Dendritic cell treated with granulocyte-macrophage colony-stimulating factor and Interleukin-4, amounts not matched to agents 40 ng/mL and 50 ng/mL, for 4 days (primary cell): ENCODE measurements at regions of chr5 and their contacts with region 1.

Region 1: GRCh38 chr5:172479044-172479783 is 24.9 kb upstream of the SH3PXD2B start:
- H3K4me3 Mint-ChIP-seq: no peak overlapping the region
- H3K27ac Mint-ChIP-seq: no peak overlapping the region
- H3K4me1 Mint-ChIP-seq: no peaks in the 10 kb centered on the region
- H3K27me3 Mint-ChIP-seq: peaks cover 7% of the 10 kb centered on the region

Region 2: DNA sequence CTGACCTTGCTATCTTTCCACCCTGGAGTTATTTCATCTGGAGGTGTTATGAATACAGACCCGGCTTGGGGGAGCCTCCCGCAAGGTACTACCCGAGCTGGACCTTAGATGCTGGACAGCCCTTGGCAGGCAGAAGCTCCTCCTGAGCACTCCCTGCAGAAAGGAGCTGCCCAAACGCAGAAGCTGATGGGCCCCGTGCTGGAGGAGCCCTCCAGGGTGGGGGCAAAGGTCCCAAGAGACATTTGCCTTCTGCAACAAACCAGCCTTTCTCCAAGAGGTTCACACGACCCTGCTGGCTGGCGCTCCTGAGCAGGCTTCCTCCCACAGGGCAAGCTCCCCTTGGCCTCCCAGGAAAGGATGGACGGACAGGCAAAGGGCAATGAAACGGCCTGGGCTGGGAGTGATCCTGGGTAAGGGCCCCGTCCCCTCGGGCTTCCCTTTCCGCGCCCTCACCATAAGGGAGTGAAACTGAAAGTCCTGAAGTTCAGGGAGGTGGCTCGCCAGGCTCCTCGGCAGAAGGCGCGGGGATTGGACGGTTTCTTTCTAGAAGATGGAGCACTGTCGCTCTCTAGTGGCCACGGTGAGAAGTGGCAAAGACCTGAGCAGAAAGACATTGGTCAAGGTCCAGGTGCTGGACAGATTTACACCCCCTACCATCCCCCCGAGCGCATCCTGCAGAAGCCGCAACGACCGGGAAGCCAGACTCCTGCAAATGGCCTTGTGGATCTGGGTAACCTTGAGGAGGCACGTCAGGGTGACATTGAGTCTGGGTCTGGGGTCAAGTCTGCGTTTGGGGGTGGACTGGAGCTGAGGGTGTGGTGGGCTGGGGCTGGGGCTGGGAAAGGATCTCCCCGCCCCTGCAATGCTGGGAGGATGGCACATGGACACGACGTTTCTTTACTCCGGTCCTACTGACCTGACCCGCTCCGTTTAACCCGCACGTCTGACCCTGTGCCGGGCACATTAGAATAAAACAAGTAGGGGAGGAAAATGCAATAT is 218.2 kb after region 1 on chr5:
- intact Hi-C with region 1: loop called (anchors 1 kb)
- H3K4me3 Mint-ChIP-seq: peak overlapping the region; percentile 79
- H3K27ac Mint-ChIP-seq: peak overlapping the region; percentile 90
- H3K4me1 Mint-ChIP-seq: peaks cover 43% of the 10 kb centered on the region
- H3K27me3 Mint-ChIP-seq: peaks cover 25% of the 10 kb centered on the region